ENCODE measurements at regions of chr12 and their contacts with region 1.

Region 1: GRCh38 chr12:117587631-117588287 is 226.3 kb upstream of the NOS1 start:
- DNase-seq: no peak
- ATAC-seq: no peak
- H3K4me3 ChIP-seq: no peak overlapping the region
- H3K27ac ChIP-seq: no peak overlapping the region
- H3K4me1 ChIP-seq: no peaks in the 10 kb centered on the region
- H3K27me3 ChIP-seq: no peaks in the 10 kb centered on the region
- CTCF ChIP-seq: peak; percentile 36
- POLR2A ChIP-seq: no peak
- RAD21 ChIP-seq: no peak

Region 2: DNA sequence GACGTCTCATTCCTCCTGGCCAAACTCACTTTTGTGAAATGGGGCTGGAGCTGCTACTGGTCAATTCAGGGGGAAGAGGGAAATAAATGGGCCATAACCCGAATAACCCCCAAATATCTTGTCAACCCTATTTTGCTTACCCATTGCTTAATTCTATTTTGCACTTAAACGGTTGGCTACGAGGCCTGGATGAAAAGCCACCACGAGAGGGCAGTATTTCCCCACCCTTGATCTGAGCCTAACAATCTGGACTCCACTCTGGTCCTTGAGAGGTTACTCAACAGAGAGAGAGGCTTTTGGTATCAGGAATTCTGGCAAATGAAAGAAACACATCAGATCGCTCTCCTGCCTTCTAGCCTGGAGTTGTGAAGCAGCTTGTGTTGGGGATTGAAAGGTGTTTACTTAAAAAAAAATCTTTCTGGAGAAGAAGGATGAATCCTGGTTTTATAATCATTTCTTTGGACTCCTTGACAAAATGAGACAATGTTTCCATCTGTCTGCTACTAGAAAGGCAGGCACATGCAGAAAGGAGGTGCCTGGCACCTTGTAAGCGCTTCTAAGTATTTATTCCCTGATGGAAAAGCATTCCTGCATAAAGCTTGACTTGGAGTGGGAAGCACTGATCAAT is 375.1 kb before region 1 on chr12:
- CTCF ChIA-PET with region 1: no interaction called
- POLR2A ChIA-PET with region 1: no interaction called
- dilution Hi-C with region 1: no loop called
- in situ Hi-C with region 1: no loop called
- intact Hi-C with region 1: loop called (anchors 2 kb)
- DNase-seq: peak; percentile 71
- ATAC-seq: peak; percentile 97
- H3K4me3 ChIP-seq: no peak overlapping the region
- H3K27ac ChIP-seq: no peak overlapping the region
- H3K4me1 ChIP-seq: no peaks in the 10 kb centered on the region
- H3K27me3 ChIP-seq: peaks cover 7% of the 10 kb centered on the region; the same call in 1 of the 2 replicates
- CTCF ChIP-seq: peak; percentile 92
- POLR2A ChIP-seq: no peak
- RAD21 ChIP-seq: peak; percentile 79

Region 3: DNA sequence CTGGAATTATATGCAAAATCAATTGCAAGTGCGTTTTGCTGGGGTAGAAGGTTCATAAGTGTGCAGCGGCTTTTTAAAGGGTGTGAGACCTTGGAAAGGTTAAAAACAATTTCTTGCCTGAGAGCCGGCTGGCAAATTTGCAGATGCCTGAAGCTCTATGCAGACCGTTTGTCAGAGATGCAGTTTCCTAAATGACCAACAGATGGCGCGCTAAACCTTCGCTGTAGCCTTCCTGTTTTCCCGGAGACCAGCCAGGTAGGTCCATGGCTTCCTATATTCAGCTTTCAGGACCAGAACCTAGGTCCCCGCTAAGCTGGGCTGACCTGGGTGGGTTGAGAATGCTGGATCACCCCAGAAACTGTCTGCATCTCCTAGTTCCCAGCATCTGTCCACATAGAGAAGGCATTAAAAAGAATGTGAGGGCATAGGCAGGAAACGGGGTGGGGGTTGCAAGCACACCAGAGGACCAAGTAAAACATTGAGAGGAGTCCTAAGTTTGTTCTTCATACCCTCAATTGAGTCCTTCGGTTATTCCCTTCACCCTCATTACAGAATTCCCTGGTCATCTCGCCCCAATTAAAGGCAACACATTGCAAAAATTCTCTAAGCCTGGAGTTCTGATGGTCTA is 220.6 kb before region 1 on chr12:
- CTCF ChIA-PET with region 1: interaction called, 3 read pairs
- POLR2A ChIA-PET with region 1: no interaction called
- dilution Hi-C with region 1: no loop called
- in situ Hi-C with region 1: no loop called
- intact Hi-C with region 1: loop called (anchors 1 kb)
- DNase-seq: peak; percentile 53
- ATAC-seq: peak; percentile 72
- H3K4me3 ChIP-seq: no peak overlapping the region
- H3K27ac ChIP-seq: no peak overlapping the region
- H3K4me1 ChIP-seq: no peaks in the 10 kb centered on the region
- H3K27me3 ChIP-seq: no peaks in the 10 kb centered on the region
- CTCF ChIP-seq: peak; percentile 69
- POLR2A ChIP-seq: no peak
- RAD21 ChIP-seq: peak; percentile 69

Region 4: GRCh38 chr12:117629454-117629853 is 41.7 kb after region 1 on chr12:
- CTCF ChIA-PET with region 1: no interaction called
- POLR2A ChIA-PET with region 1: no interaction called
- dilution Hi-C with region 1: no loop called
- in situ Hi-C with region 1: no loop called
- intact Hi-C with region 1: no loop called
- DNase-seq: no peak
- ATAC-seq: no peak
- H3K4me3 ChIP-seq: no peak overlapping the region
- H3K27ac ChIP-seq: no peak overlapping the region
- H3K4me1 ChIP-seq: no peaks in the 10 kb centered on the region
- H3K27me3 ChIP-seq: no peaks in the 10 kb centered on the region
- CTCF ChIP-seq: no peak
- POLR2A ChIP-seq: no peak
- RAD21 ChIP-seq: no peak